ENCODE measurements at regions of chr20 and their contacts with region 1.

Region 1: GRCh38 chr20:5529331-5530148 is 212.8 kb upstream of the PROKR2 start:
- DNase-seq: peak; percentile 6
- H3K4me3 ChIP-seq: peak overlapping the region in 1 of 4 donors; percentile 5
- H3K27ac ChIP-seq: no peak overlapping the region
- H3K4me1 ChIP-seq: peaks cover 3 to 16% (median 5%) of the 10 kb centered on the region in 3 donors
- H3K27me3 ChIP-seq: no peaks in the 10 kb centered on the region
- CTCF ChIP-seq: peak; percentile 45 to 80 (median 75)
- POLR2A ChIP-seq: no peak

Region 2: DNA sequence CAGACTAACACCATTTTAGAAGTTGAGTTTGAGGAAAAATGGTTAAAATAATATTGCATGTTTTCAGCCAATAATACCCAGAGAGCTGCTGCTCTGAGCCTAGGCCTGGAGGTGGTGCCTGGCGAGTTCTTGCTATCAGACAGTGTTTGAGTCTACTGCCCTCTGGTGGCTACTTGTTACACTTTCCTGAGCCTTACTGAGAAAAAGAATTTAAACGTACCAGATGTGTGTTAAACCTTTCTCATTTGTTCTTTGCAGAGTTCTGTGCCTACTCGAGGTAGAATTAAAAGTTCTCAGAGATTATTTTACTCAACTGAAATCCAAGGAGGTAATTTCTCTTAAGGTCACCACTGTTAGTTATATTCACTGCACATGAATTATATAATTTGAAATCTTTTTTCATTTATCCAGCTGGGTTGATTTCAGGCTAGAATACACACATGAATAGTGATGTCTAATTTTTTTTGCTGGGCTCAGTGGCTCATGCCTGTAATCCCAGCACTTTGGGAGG is 258.9 kb after region 1 on chr20:
- intact Hi-C with region 1: loop called (anchors 5 kb)
- DNase-seq: peak; percentile 40
- H3K4me3 ChIP-seq: no peak overlapping the region
- H3K27ac ChIP-seq: no peak overlapping the region
- H3K4me1 ChIP-seq: peaks cover 0 to 39% (median 13%) of the 10 kb centered on the region in 3 donors
- H3K27me3 ChIP-seq: no peaks in the 10 kb centered on the region
- CTCF ChIP-seq: peak; percentile 77 to 93 (median 92)
- POLR2A ChIP-seq: no peak

Region 3: GRCh38 chr20:6075428-6076219 is 546.1 kb after region 1 on chr20:
- intact Hi-C with region 1: loop called (anchors 5 kb)
- DNase-seq: no peak
- H3K4me3 ChIP-seq: no peak overlapping the region
- H3K27ac ChIP-seq: no peak overlapping the region
- H3K4me1 ChIP-seq: peaks cover 0 to 35% (median 3%) of the 10 kb centered on the region in 3 donors
- H3K27me3 ChIP-seq: no peaks in the 10 kb centered on the region
- CTCF ChIP-seq: no peak
- POLR2A ChIP-seq: no peak